Mammary epithelial cell (primary cell): ENCODE measurements at regions of chr2 and their contacts with region 1.

Region 1: GRCh38 chr2:96024336-96025193 is 10.2 kb downstream of the GPAT2 start:
- DNase-seq: no peak
- H3K4me3 ChIP-seq: no peak overlapping the region
- H3K27ac ChIP-seq: no peak overlapping the region
- H3K4me1 ChIP-seq: no peaks in the 10 kb centered on the region
- H3K27me3 ChIP-seq: no peaks in the 10 kb centered on the region
- CTCF ChIP-seq: no peak

Region 2: GRCh38 chr2:95757988-95758387 is 266.6 kb before region 1 on chr2:
- CTCF ChIA-PET with region 1: no interaction called
- dilution Hi-C with region 1: no loop called
- in situ Hi-C with region 1: no loop called
- intact Hi-C with region 1: no loop called
- DNase-seq: no peak
- H3K4me3 ChIP-seq: no peak overlapping the region
- H3K27ac ChIP-seq: no peak overlapping the region
- H3K4me1 ChIP-seq: peaks cover 4% of the 10 kb centered on the region
- H3K27me3 ChIP-seq: no peaks in the 10 kb centered on the region
- CTCF ChIP-seq: no peak

Region 3: GRCh38 chr2:96116879-96117697 is 92.5 kb after region 1 on chr2:
- CTCF ChIA-PET with region 1: no interaction called
- dilution Hi-C with region 1: no loop called
- in situ Hi-C with region 1: loop called in 1 of 2 experiments (anchors 25 kb)
- intact Hi-C with region 1: no loop called
- DNase-seq: peak; percentile 53
- H3K4me3 ChIP-seq: peak overlapping the region; percentile 26 to 54 (median 52)
- H3K27ac ChIP-seq: no peak overlapping the region
- H3K4me1 ChIP-seq: peaks cover 9% of the 10 kb centered on the region
- H3K27me3 ChIP-seq: no peaks in the 10 kb centered on the region
- CTCF ChIP-seq: peak; percentile 52 to 64

Region 4: DNA sequence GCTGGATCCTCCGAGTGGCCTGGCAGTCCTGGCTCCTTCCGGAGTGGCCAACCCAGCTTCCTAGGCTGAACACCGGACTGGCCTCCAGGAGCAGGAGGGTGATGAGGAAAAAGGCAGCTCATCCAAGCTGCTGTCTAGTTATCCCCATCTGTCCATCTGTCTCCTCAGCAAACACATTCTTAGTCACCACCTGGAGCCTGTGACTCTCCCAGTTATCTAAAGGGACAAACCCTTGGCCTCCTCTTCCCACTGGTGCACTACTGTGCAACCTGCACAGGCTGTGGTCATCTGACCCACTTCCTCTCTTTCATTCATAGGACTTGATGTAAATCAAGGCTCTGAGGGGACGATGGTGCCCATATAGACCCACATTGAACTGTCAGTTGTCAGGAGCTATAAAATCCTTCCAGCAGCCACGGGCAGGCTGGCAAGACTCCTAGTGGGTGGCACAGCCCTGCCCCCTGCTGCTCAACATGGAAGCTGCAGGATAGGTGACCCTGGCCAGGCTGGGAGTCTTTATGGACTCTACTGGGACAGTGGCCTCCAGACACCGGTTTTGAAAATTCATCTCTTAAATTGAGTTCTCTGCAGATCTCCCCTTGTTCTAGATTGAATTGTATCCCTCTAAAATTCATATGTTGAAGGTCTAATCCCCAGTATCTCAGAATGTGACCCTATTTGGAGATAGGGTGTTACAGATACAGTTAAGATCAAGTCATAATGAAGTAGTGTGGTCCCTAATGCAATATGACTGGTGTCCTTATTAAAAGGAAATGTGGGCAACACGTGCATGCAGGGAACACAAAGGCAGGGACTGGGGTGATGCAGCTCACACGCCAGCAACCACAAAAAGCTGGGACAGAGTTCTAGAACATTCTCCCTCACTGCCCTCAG is 149.9 kb after region 1 on chr2:
- CTCF ChIA-PET with region 1: interaction called, 9 read pairs
- dilution Hi-C with region 1: loop called (anchors 25 kb)
- in situ Hi-C with region 1: loop called in 1 of 2 experiments (anchors 25 kb)
- intact Hi-C with region 1: loop called (anchors 10 kb)
- DNase-seq: peak; percentile 41
- H3K4me3 ChIP-seq: no peak overlapping the region
- H3K27ac ChIP-seq: no peak overlapping the region
- H3K4me1 ChIP-seq: no peaks in the 10 kb centered on the region
- H3K27me3 ChIP-seq: no peaks in the 10 kb centered on the region
- CTCF ChIP-seq: peak; percentile 94 to 97

Region 5: GRCh38 chr2:96265840-96266679 is 241.5 kb after region 1 on chr2 and contains the starts of genes CIAO1 and TMEM127:
- CTCF ChIA-PET with region 1: no interaction called
- dilution Hi-C with region 1: no loop called
- in situ Hi-C with region 1: loop called in 1 of 2 experiments (anchors 25 kb)
- intact Hi-C with region 1: no loop called
- DNase-seq: peak; percentile 99
- H3K4me3 ChIP-seq: peak within 1 kb of the TSS; percentile 93 to 98 (median 96)
- H3K27ac ChIP-seq: peak within 1 kb of the TSS; percentile 76
- H3K4me1 ChIP-seq: peaks cover 30% of the 10 kb centered on the region
- H3K27me3 ChIP-seq: no peaks in the 10 kb centered on the region
- CTCF ChIP-seq: peak in 1 of 2 donors; percentile 28
- total RNA-seq, gene CIAO1: 64.5 to 93.9 TPM
- total RNA-seq, gene TMEM127: 39.9 to 43.8 TPM